ENCODE measurements at regions of chr14 and their contacts with region 1.

Region 1: GRCh38 chr14:90409209-90409730 is 12.4 kb downstream of the CALM1 start:
- DNase-seq: peak in 1 of 2 donors; percentile 81
- ATAC-seq: peak; percentile 82 to 96 (median 88)
- H3K4me3 ChIP-seq: no peak overlapping the region
- H3K27ac ChIP-seq: peak overlapping the region; percentile 30 to 90 (median 81)
- H3K4me1 ChIP-seq: peaks cover 5 to 48% (median 25%) of the 10 kb centered on the region in 9 donors
- H3K27me3 ChIP-seq: no peaks in the 10 kb centered on the region
- CTCF ChIP-seq: no peak

Region 2: DNA sequence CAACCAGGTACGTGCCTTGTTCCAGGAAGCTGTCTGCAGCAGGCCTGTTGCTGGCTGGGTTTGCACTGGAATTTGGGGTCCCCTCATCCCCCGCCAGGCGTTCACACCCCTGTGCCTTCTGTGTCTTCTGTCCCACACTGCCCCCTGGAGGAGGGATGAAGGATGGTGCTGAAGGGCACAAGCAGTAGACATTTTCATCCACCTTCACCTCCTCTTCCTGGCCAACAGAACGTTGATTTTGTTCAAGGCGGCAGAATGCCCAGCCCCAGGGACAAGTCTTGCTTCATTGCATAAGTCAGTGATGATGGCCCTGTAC is 109.6 kb after region 1 on chr14:
- intact Hi-C with region 1: loop called in 3 of 10 experiments (anchors 5 to 10 kb)
- DNase-seq: no peak
- ATAC-seq: peak in 1 of 8 donors; percentile 34
- H3K4me3 ChIP-seq: no peak overlapping the region
- H3K27ac ChIP-seq: peak overlapping the region in 1 of 10 donors; percentile 1
- H3K4me1 ChIP-seq: peaks cover 25 to 67% (median 59%) of the 10 kb centered on the region in 9 donors
- H3K27me3 ChIP-seq: no peaks in the 10 kb centered on the region
- CTCF ChIP-seq: peak; percentile 9 to 68 (median 51)

Measured in heart right ventricle (tissue), 16 donors.